GM10248 (cell line): ENCODE measurements at regions of chr7 and their contacts with region 1.

Region 1: DNA sequence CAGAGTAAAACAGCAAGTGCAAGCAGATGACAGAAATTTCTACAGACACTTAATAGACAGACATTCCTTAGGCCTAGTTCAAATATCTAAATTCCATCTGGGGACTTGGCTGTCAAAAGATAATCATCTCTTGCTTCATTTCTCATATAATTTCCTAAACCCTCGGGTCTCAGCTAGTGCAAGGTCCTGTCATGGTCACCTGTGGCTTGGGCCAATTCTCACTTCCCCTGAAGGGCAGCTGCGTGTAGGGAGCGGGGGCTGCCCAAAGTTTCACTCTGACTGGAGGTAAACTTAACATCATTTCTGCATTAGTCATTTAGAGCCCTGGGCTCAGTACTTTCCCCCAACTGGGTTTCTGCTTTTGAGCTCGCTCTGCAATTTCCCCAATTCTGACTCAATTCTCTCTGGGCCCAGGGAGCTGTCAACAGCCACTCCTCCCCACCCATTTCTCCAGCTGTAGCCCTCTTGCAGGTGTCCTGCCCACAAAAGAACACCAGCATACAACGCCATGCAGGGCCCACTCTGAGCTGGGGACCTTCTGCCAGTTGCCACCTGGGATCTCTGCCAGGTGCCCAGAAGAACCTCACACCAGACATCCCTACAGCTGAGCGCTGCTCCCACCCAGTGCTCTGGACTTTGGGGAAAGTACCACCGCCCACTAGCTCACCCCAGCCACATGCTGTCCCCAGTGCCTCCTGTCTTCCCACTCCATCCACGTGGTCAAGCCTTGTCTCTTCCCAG is 38.0 kb downstream of the VOPP1 start:
- DNase-seq: peak; percentile 86
- CTCF ChIP-seq: no peak

Region 2: DNA sequence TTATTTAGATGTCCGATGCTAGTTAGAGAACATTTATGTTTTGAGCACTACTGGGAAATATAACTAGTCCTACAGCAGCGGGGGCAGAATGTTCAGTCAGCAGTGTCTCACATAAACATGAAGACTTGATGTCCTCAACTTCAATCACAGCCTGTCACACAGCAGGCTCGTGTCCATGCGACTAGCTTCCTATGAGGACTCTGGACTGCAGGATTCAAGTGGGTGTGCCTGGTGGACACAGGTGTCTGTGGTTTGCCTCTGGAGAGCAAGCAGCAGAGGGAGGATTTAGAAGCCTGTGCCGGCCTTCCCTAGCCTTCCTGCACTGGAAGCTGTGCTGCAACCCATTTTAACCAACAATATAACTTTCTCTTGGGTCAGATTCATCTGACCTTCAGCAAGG is 199.2 kb before region 1 on chr7:
- CTCF ChIA-PET with region 1: no interaction called
- POLR2A ChIA-PET with region 1: no interaction called
- DNase-seq: no peak
- CTCF ChIP-seq: no peak

Region 3: DNA sequence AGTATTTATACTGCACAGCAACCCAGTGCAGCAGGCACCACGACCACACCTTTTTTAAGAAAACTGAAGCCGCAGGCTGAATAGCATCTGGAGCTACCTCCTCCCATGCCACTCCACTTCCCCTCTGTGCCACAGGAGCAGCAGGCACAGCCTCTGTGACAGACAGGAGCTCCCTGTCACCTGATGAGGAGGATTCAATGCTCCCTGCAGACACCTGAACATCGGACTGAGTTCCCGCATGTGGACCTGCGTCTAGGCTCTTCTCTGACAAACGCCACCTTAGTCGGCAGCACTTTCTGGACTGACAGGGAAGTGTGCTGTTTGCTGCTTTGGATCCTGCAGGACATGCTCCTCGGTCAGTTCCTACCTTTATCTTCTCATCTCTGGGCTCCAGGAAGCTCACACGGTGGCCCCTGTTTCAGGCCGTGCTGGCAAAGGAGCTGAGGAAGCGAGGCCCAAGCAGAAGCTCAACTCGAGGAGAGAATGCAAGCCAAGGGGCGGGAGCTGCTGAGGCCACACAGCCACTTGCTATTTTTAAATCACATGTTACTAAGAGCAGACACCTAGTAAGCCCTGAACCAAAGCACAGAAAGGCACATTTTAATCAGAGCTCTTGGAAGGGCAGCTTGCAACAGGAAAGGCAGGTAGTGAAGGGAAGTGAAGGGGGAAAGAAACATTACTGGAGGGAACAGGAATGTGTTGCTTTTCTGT is 18.6 kb before region 1 on chr7:
- CTCF ChIA-PET with region 1: interaction called, 150 read pairs
- POLR2A ChIA-PET with region 1: interaction called, 51 read pairs
- DNase-seq: peak; percentile 64
- CTCF ChIP-seq: no peak

Region 4: DNA sequence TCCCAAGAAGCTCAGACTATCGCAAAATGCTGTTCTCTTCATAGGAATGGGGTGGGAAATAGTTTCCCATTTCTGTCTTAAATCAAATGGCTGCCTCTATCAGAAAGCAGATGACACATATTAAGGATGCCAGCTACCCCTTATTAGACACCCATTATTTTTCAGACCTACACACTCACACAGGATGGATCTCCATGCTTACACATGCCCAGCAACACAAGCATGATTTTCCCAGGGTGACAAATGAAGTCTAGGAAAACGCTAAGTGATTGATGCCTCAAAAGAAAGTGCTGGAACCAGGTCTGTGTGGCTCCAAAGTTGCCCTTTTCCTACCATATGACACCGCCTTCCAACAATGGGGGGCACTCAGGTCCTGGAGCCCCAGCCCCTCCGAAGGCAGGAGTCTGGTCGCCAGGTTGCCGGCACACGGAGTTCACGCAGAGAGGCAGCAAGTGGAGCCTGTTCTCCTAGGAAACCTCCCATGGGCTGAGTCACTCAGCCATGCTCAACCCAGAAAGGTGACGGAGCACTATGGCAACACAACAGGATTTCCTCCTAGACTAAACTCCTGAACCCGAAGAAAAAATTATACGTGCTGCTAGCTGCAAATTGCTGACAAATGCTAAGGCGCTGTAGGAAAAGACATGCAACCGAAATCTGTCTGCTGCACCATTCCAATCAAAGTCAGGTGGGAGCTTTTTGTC is 18.1 kb after region 1 on chr7:
- CTCF ChIA-PET with region 1: interaction called, 124 read pairs
- POLR2A ChIA-PET with region 1: interaction called, 27 read pairs
- DNase-seq: no peak
- CTCF ChIP-seq: no peak

Region 5: GRCh38 chr7:55567571-55567970 is 33.2 kb after region 1 on chr7:
- CTCF ChIA-PET with region 1: interaction called, 21 read pairs
- POLR2A ChIA-PET with region 1: interaction called, 11 read pairs
- DNase-seq: no peak
- CTCF ChIP-seq: no peak